ENCODE measurements at regions of chrX and their contacts with region 1.

Region 1: GRCh38 chrX:10189317-10190268 is 32.8 kb downstream of the CLCN4 start:
- DNase-seq: peak; percentile 89

Region 2: DNA sequence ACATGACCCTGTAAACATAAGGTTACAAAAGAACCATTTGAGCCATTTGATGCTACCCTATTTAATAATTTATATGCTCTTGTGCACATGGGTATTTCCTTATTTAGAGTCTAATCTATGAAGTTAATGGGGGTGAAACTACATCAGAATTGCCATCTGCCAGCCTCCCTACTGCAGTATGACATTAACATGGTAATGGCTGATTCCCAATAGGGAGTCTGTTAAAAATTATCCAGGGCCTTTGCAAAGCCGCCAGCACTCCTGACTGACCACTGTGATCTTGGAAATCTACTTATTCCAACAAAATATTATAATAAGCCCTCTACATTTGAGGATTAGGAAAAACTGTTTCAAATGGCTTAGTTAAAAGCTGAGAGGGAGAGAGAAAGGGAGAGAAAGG is 120.9 kb after region 1 on chrX:
- intact Hi-C with region 1: no loop called
- DNase-seq: no peak

Region 3: GRCh38 chrX:10329984-10330383 is 140.4 kb after region 1 on chrX:
- intact Hi-C with region 1: loop called in 1 of 2 experiments (anchors 5 kb)
- DNase-seq: no peak

Region 4: DNA sequence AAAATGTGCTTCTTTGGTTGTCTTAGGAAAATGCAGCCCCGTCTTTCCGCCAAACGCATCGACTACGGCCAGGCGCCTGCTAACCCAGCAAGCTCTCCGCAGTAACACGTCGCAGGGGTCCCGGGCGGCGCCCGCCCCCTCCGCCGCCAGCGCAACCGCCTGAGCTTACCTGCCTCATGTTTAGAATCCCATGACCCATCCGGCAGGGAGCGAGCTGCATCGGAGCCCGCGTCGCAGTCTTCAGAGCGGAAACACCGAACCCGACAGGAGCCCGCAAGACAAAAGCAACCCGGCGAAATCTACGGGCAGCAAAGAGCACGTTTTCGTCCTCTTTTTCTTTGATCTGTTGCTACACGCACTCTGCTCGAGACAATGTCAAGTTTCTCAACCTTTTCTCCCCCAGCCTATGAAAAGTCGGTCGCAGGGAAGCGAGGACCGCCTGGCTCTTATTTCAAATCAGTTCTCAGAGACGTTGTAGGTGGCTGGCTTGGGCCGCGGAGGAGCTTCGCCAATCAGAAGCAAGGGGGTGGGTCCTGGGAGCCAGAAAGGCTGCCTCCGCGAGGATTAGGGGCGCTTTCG is 430.6 kb after region 1 on chrX and contains the start of gene MID1:
- intact Hi-C with region 1: loop called in 1 of 2 experiments (anchors 10 kb)
- DNase-seq: peak; percentile 83
- total RNA-seq, gene MID1: 22.2 to 36.5 TPM

Region 5: GRCh38 chrX:11137543-11138139 is 948.0 kb after region 1 on chrX:
- intact Hi-C with region 1: loop called (anchors 2 to 10 kb)
- DNase-seq: no peak